ENCODE measurements at regions of chr6 and their contacts with region 1.

Region 1: GRCh38 chr6:132300323-132300949 is 100.8 kb downstream of the MOXD1 start:
- DNase-seq: peak; percentile 73
- ATAC-seq: peak; percentile 96
- H3K4me3 ChIP-seq: no peak overlapping the region
- H3K4me3 Mint-ChIP-seq: no peak overlapping the region
- H3K27ac ChIP-seq: no peak overlapping the region
- H3K27ac Mint-ChIP-seq: no peak overlapping the region
- H3K4me1 ChIP-seq: no peaks in the 10 kb centered on the region
- H3K4me1 Mint-ChIP-seq: no peaks in the 10 kb centered on the region
- H3K27me3 ChIP-seq: no peaks in the 10 kb centered on the region
- H3K27me3 Mint-ChIP-seq: no peaks in the 10 kb centered on the region
- CTCF ChIP-seq: peak; percentile 81

Region 2: GRCh38 chr6:131574133-131574532 is 726.3 kb before region 1 on chr6:
- CTCF ChIA-PET with region 1: no interaction called
- POLR2A ChIA-PET with region 1: no interaction called
- intact Hi-C with region 1: no loop called
- DNase-seq: no peak
- ATAC-seq: no peak
- H3K4me3 ChIP-seq: peak overlapping the region in 1 of 5 experiments; percentile 48
- H3K4me3 Mint-ChIP-seq: no peak overlapping the region
- H3K27ac ChIP-seq: no peak overlapping the region
- H3K27ac Mint-ChIP-seq: no peak overlapping the region
- H3K4me1 ChIP-seq: no peaks in the 10 kb centered on the region
- H3K4me1 Mint-ChIP-seq: peaks cover 5% of the 10 kb centered on the region
- H3K27me3 ChIP-seq: no peaks in the 10 kb centered on the region
- H3K27me3 Mint-ChIP-seq: no peaks in the 10 kb centered on the region
- CTCF ChIP-seq: no peak

Region 3: DNA sequence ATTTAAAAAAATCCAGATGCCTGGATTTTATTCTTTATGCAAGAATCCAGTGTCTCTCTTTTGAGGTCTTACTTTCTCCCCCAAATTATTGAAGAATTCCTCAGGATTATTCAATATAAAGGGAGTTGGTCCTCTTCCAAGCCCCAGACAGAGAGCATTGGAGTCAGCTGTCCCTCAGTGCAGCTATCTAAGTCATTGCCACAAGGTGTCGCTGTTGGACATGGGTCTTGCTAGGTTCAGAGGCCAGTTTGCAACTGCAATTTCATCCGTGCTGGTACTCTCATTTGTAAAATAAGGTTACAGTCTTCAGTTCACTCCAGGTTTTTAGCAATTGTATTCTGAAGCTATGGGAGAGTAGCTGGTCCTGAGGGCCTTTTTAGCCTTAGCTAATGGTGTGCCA is 377.1 kb before region 1 on chr6:
- CTCF ChIA-PET with region 1: interaction called, 9 read pairs
- POLR2A ChIA-PET with region 1: no interaction called
- intact Hi-C with region 1: loop called (anchors 2 kb)
- DNase-seq: peak; percentile 62
- ATAC-seq: peak; percentile 53
- H3K4me3 ChIP-seq: no peak overlapping the region
- H3K4me3 Mint-ChIP-seq: no peak overlapping the region
- H3K27ac ChIP-seq: no peak overlapping the region
- H3K27ac Mint-ChIP-seq: no peak overlapping the region
- H3K4me1 ChIP-seq: no peaks in the 10 kb centered on the region
- H3K4me1 Mint-ChIP-seq: no peaks in the 10 kb centered on the region
- H3K27me3 ChIP-seq: peaks cover 0 to 13% (median 0%) of the 10 kb centered on the region in 4 experiments
- H3K27me3 Mint-ChIP-seq: peaks cover 4% of the 10 kb centered on the region
- CTCF ChIP-seq: peak; percentile 67

Region 4: GRCh38 chr6:132247381-132248159 is 52.9 kb before region 1 on chr6:
- CTCF ChIA-PET with region 1: no interaction called
- POLR2A ChIA-PET with region 1: no interaction called
- intact Hi-C with region 1: no loop called
- DNase-seq: no peak
- ATAC-seq: no peak
- H3K4me3 ChIP-seq: no peak overlapping the region
- H3K4me3 Mint-ChIP-seq: no peak overlapping the region
- H3K27ac ChIP-seq: no peak overlapping the region
- H3K27ac Mint-ChIP-seq: no peak overlapping the region
- H3K4me1 ChIP-seq: no peaks in the 10 kb centered on the region
- H3K4me1 Mint-ChIP-seq: no peaks in the 10 kb centered on the region
- H3K27me3 ChIP-seq: peaks cover 0 to 4% (median 0%) of the 10 kb centered on the region in 4 experiments
- H3K27me3 Mint-ChIP-seq: peaks cover 11% of the 10 kb centered on the region
- CTCF ChIP-seq: no peak

Region 5: GRCh38 chr6:132333639-132334520 is 33.4 kb after region 1 on chr6:
- CTCF ChIA-PET with region 1: interaction called, 6 read pairs
- POLR2A ChIA-PET with region 1: no interaction called
- intact Hi-C with region 1: loop called (anchors 5 kb)
- DNase-seq: no peak
- ATAC-seq: no peak
- H3K4me3 ChIP-seq: no peak overlapping the region
- H3K4me3 Mint-ChIP-seq: no peak overlapping the region
- H3K27ac ChIP-seq: no peak overlapping the region
- H3K27ac Mint-ChIP-seq: no peak overlapping the region
- H3K4me1 ChIP-seq: no peaks in the 10 kb centered on the region
- H3K4me1 Mint-ChIP-seq: peaks cover 5% of the 10 kb centered on the region
- H3K27me3 ChIP-seq: no peaks in the 10 kb centered on the region
- H3K27me3 Mint-ChIP-seq: peaks cover 5% of the 10 kb centered on the region
- CTCF ChIP-seq: no peak

Region 6: DNA sequence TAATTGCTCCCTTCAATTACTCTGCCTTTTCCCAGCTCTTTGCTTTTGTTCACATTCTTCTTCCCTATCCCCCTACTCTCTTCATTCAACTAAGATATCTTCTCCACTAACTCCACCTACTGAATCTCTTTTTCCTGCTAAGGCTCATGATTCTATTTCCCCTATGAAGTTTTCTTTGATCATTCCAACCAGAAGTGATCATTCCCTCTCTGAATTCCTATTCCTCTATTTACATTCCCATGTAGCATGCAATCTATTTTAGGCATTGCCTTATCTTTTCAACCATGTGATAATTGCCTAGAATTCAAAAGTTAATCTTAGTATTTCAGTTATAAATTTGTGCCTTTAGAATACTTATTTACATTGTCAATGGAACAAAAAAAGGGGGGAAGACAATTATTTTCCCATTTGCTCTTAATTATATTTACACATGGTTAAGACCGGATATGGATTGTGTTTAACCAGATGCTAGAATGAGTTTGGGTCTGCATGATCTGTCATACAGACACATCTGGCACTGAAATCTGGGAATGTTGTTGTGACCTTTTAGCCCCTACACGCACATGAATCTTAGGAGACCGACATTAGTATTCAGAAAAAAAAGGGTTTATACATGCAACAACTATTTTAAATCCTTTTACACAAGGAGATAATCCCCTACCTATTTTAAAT is 80.1 kb after region 1 on chr6:
- CTCF ChIA-PET with region 1: interaction called, 11 read pairs
- POLR2A ChIA-PET with region 1: no interaction called
- intact Hi-C with region 1: no loop called
- DNase-seq: no peak
- ATAC-seq: no peak
- H3K4me3 ChIP-seq: no peak overlapping the region
- H3K4me3 Mint-ChIP-seq: no peak overlapping the region
- H3K27ac ChIP-seq: no peak overlapping the region
- H3K27ac Mint-ChIP-seq: no peak overlapping the region
- H3K4me1 ChIP-seq: peaks cover 4 to 14% of the 10 kb centered on the region in 2 donors
- H3K4me1 Mint-ChIP-seq: peaks cover 19% of the 10 kb centered on the region
- H3K27me3 ChIP-seq: no peaks in the 10 kb centered on the region
- H3K27me3 Mint-ChIP-seq: no peaks in the 10 kb centered on the region
- CTCF ChIP-seq: no peak

Region 7: DNA sequence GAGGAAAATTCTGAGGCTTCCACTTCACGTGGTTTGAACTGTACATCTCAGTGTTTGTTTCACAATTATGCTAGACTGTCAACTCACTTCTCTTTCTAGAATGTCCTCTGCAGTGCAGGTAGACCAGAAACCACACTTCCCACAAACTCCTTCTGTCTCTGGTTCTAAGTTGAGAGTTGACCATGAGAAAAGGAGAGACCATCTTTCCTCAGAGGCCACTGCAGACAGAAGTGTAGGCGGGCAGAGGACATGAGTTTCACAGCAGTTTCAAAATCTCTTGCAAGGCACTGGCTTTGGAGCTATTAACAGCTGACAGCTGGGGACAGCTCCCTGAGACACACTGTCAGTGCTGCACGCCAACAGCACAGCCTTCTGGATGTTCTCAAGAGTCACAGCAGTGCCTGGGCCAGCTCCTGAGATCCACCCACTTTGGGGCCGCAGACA is 156.3 kb after region 1 on chr6:
- CTCF ChIA-PET with region 1: interaction called, 36 read pairs
- POLR2A ChIA-PET with region 1: no interaction called
- intact Hi-C with region 1: no loop called
- DNase-seq: no peak
- ATAC-seq: no peak
- H3K4me3 ChIP-seq: no peak overlapping the region
- H3K4me3 Mint-ChIP-seq: no peak overlapping the region
- H3K27ac ChIP-seq: peak overlapping the region in 1 of 2 donors; percentile 51
- H3K27ac Mint-ChIP-seq: peak overlapping the region; percentile 85
- H3K4me1 ChIP-seq: peaks cover 0 to 14% of the 10 kb centered on the region in 2 donors
- H3K4me1 Mint-ChIP-seq: peaks cover 38% of the 10 kb centered on the region
- H3K27me3 ChIP-seq: no peaks in the 10 kb centered on the region
- H3K27me3 Mint-ChIP-seq: no peaks in the 10 kb centered on the region
- CTCF ChIP-seq: no peak